A549 (cell line): ENCODE measurements at regions of chr5 and their contacts with region 1.

Region 1: GRCh38 chr5:54492178-54492577 is 25.4 kb upstream of the SNX18 start:
- DNase-seq: no peak
- ATAC-seq: no peak
- H3K4me3 ChIP-seq: no peak overlapping the region
- H3K27ac ChIP-seq: no peak overlapping the region
- H3K4me1 ChIP-seq: no peaks in the 10 kb centered on the region
- CTCF ChIP-seq: no peak
- EP300 ChIP-seq: no peak
- POLR2A ChIP-seq: no peak
- RAD21 ChIP-seq: no peak

Region 2: DNA sequence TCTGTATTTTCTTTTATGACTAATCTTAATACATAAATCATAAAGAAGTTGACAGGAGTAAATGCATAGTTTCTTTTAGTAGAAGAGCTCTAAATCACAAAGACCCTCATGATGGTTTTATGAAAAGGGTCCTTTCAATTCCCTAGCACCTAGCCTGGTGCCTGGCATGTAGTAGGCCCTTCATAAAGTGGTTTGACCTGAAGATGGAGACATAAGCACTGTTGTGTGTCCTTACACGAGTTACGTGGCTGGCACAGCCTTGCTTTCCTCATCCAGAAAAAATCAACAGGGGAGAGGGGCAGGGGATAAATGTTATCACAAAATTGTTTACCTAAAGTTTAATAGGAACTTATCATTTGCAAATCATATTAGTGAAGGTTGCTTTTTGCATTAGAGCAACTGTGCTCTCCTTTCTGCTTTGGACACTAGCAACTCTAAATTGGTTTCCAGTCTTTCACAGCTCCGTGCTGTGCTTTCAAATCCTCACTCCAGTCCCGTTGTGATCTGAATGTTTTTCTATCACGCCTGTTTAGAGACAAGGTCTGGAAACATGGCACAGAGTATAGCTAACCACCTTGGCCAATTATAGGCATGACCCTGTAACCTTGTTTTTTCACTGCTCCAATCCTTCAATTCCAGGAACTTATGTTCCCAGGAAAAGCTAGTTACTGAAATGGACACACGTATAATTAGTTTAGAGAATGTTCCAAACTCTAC is 237.5 kb before region 1 on chr5:
- CTCF ChIA-PET with region 1: interaction called, 13 read pairs
- POLR2A ChIA-PET with region 1: no interaction called
- DNase-seq: peak in 1 of 2 experiments; percentile 6
- ATAC-seq: no peak
- H3K4me3 ChIP-seq: no peak overlapping the region
- H3K27ac ChIP-seq: no peak overlapping the region
- H3K4me1 ChIP-seq: no peaks in the 10 kb centered on the region
- CTCF ChIP-seq: 0 out of 3 replicates have a peak, but pooled peaks have one; percentile 7
- EP300 ChIP-seq: no peak
- POLR2A ChIP-seq: no peak
- RAD21 ChIP-seq: peak in 1 of 2 experiments; percentile 22; a peak in 2 of 5 replicates

Region 3: GRCh38 chr5:54425258-54425657 is 66.9 kb before region 1 on chr5:
- CTCF ChIA-PET with region 1: interaction called, 20 read pairs
- POLR2A ChIA-PET with region 1: no interaction called
- DNase-seq: no peak
- ATAC-seq: no peak
- H3K4me3 ChIP-seq: no peak overlapping the region
- H3K27ac ChIP-seq: no peak overlapping the region
- H3K4me1 ChIP-seq: no peaks in the 10 kb centered on the region
- CTCF ChIP-seq: no peak
- EP300 ChIP-seq: no peak
- POLR2A ChIP-seq: no peak
- RAD21 ChIP-seq: no peak

Region 4: DNA sequence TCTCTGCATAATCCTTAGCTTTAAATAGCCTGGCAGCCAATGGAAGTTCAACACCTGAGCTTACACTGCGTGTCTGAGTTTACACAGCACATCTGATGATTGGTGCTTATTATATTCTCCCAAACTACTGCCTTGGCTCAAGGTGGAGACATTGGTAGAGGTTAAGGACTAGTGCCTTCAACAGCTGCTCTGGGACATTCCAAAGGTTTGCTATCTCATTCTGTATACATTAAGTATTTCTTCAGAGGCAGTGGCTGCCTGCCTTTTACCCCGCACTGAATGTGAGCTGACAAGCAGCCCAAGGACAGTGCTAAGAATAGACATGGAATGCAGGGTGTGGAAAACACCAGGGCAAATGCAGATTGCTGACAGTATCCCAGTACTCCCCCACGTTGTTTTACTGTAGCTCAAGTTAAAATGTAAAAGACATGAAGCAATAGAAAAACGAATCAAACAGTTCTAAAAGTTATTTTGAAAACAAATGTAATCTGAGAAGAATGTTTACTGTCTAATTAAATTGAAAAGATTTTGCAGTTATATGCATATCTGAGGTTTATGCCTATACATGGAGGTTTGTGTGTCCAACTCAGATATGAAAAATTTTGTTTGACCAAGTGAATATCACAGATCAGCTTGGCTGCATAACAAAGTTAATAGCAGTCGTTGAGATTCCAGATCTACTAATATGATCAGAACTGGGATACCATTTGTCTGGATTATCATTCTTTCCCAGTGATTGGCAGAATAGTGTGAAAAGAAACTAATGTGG is 34.9 kb before region 1 on chr5:
- CTCF ChIA-PET with region 1: interaction called, 17 read pairs
- POLR2A ChIA-PET with region 1: no interaction called
- DNase-seq: peak; percentile 55 to 85
- ATAC-seq: peak; percentile 95 to 96
- H3K4me3 ChIP-seq: no peak overlapping the region
- H3K27ac ChIP-seq: peak overlapping the region; percentile 58 to 70; a peak in 5 of 6 replicates
- H3K4me1 ChIP-seq: peaks cover 46% of the 10 kb centered on the region
- CTCF ChIP-seq: no peak
- EP300 ChIP-seq: no peak; a peak in 1 of 5 replicates
- POLR2A ChIP-seq: no peak
- RAD21 ChIP-seq: no peak

Region 5: GRCh38 chr5:54480296-54480695 is 11.9 kb before region 1 on chr5:
- CTCF ChIA-PET with region 1: interaction called, 11 read pairs
- POLR2A ChIA-PET with region 1: no interaction called
- DNase-seq: no peak
- ATAC-seq: no peak
- H3K4me3 ChIP-seq: no peak overlapping the region
- H3K27ac ChIP-seq: no peak overlapping the region
- H3K4me1 ChIP-seq: no peaks in the 10 kb centered on the region
- CTCF ChIP-seq: no peak
- EP300 ChIP-seq: no peak
- POLR2A ChIP-seq: no peak
- RAD21 ChIP-seq: no peak

Region 6: DNA sequence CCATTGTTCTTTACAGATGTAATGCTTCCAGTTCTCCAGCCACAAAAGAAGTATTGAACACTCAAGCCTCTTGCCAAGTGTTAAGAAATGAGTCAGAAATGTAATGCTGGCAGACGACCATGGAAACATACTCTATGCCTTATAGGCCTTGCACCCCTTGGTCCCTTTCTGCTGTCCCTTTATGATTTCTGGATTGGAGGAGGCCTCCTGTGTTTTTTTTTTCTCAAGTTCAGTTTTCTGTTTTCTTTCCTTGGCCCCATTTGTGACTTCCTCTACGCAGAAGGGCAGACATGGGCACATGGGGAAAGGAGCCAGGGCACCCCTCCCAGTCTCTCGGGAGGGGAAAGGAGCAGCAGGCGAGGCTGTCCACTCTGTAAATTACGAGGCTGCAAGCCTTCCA is 78.7 kb after region 1 on chr5:
- CTCF ChIA-PET with region 1: no interaction called
- POLR2A ChIA-PET with region 1: no interaction called
- DNase-seq: no peak
- ATAC-seq: no peak
- H3K4me3 ChIP-seq: no peak overlapping the region
- H3K27ac ChIP-seq: no peak overlapping the region
- H3K4me1 ChIP-seq: no peaks in the 10 kb centered on the region
- CTCF ChIP-seq: no peak
- EP300 ChIP-seq: no peak
- POLR2A ChIP-seq: no peak
- RAD21 ChIP-seq: no peak